OCI-LY7 (cell line): ENCODE measurements at regions of chr1 and their contacts with region 1.

Region 1: GRCh38 chr1:8423650-8424538 is 106.0 kb downstream of the SLC45A1 start:
- DNase-seq: peak; percentile 84
- H3K4me3 ChIP-seq: peak overlapping the region; percentile 87
- H3K27ac ChIP-seq: peak overlapping the region; percentile 99
- H3K4me1 ChIP-seq: peaks cover 64% of the 10 kb centered on the region
- CTCF ChIP-seq: no peak

Region 2: DNA sequence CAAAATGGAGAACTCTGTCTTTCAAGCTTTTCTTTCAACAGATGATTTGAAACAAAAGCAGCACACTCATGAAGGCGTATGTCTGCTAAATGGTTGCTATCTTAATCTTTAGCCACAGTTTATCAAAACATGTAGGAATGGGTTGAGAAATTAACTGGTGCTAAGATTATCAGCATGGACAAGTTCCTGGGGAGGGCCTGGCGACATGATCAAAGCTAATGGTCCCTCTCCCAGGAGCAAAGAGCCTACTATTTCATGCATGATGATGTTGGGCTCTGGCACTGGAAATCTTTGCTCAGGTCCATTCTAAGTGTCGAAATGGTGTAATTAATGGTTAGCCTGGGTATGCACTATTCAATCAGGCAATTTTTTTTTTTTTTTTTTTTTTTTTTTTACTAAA is 14.3 kb before region 1 on chr1:
- CTCF ChIA-PET with region 1: interaction called, 6 read pairs
- POLR2A ChIA-PET with region 1: interaction called, 10 read pairs
- intact Hi-C with region 1: no loop called
- DNase-seq: no peak
- H3K4me3 ChIP-seq: no peak overlapping the region
- H3K27ac ChIP-seq: peak overlapping the region; percentile 30
- H3K4me1 ChIP-seq: peaks cover 32% of the 10 kb centered on the region
- CTCF ChIP-seq: no peak

Region 3: DNA sequence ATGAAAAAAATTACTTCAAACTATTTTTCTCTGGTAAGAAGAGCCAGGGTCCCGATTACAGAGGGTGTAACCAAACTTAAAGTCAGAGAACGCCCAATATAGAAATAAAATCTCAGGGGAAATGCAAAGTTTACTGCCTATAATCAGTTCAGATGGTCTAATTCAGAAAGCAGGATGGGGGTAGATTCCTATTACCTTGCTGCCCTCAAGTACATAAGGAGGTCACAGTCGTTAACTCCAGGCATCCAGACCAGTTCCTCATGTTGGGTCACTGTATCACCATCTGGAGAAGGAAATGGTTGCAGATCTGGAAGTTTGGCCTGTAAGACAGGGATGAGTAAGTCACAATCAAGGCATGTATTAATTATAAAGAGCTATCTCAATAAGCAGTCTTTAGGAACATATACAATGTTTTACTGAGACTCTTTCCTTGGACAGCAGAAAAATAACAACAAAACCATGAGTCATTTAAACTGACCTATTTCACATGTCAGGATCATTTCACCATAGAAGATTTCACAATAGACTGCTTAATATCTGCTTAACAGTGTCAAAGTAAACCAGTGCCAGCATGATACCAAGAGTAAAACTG is 73.4 kb after region 1 on chr1:
- CTCF ChIA-PET with region 1: no interaction called
- POLR2A ChIA-PET with region 1: interaction called, 14 read pairs
- intact Hi-C with region 1: loop called (anchors 2 kb)
- DNase-seq: peak; percentile 84
- H3K4me3 ChIP-seq: peak overlapping the region; percentile 40
- H3K27ac ChIP-seq: peak overlapping the region; percentile 94
- H3K4me1 ChIP-seq: peaks cover 71% of the 10 kb centered on the region
- CTCF ChIP-seq: no peak

Region 4: GRCh38 chr1:8525558-8526275 is 101.8 kb after region 1 on chr1:
- CTCF ChIA-PET with region 1: no interaction called
- POLR2A ChIA-PET with region 1: interaction called, 12 read pairs
- intact Hi-C with region 1: loop called (anchors 2 kb)
- DNase-seq: peak; percentile 92
- H3K4me3 ChIP-seq: peak overlapping the region; percentile 74
- H3K27ac ChIP-seq: peak overlapping the region; percentile 91
- H3K4me1 ChIP-seq: peaks cover 80% of the 10 kb centered on the region
- CTCF ChIP-seq: no peak

Region 5: DNA sequence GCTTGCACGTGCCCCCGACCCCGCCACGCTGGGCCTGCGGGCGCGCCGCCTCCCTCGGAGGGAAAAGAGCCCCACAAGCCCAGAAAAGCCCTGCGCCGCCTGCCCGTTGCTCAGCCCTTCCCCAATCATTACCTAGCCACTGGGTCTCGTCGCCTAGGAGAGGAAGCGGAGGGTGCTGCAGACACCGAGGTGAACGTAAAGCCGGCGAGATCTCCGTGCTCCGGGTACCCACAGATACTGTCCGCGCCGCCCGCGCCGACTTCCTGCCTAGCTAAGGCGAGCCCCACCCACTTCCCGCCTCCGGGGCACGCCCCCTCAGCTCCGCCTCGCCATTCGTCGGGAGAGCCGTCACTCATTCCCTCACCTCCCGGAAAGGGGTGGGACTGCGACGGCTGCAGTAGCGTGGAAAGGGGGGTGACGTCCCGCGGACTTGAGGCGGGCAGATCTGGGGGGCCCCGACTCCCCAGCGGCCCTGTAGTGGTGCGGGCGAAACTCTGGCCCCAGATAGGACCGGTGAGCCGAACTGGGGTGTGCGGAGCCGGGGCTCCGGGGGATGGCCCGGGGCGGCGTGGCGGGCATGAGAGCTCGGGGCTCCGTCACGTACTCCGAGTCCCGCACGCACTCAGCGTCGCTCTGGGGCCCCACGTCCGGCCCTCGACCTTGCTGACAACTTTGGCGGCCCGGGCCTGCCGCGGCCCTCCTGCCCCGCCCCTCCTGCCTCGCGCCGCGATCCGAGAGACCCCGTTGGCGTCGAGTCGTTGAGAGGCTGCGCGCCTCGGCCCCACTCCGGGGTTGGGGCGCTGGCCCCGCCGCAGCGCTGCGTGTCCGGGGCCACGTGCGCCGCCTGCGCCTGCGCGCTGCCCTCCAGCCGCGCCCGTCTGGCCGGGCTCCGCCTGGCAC is 454.8 kb after region 1 on chr1 and contains the start of gene ENO1:
- CTCF ChIA-PET with region 1: no interaction called
- POLR2A ChIA-PET with region 1: interaction called, 3 read pairs
- intact Hi-C with region 1: loop called (anchors 5 kb)
- DNase-seq: peak; percentile 97
- H3K4me3 ChIP-seq: peak within 1 kb of the TSS; percentile 99
- H3K27ac ChIP-seq: peak within 1 kb of the TSS; percentile 77
- H3K4me1 ChIP-seq: peaks cover 41% of the 10 kb centered on the region
- CTCF ChIP-seq: no peak
- total RNA-seq, gene ENO1: 1,017 and 1,033 TPM in 2 replicates